ENCODE measurements at regions of chr3 and their contacts with region 1.

Region 1: DNA sequence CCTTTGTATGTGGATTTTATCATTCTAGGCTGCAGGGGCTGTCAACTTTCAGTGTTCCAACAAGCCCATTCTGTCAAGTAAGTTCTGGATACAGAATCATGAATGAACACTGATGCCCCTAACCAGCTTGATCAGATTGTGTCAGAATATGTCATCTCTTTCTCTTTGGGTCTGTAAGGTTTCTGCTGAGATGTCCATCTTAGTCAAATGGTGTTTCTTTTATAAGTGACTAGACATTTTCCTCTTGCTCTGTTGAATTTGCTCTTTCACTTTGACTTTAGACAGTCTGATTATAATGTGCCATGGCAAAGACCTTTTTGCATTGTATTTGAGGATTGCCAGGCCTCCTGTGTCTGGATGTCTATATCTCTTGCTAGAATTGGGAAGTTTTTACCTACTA is 660.9 kb upstream of the CBLB start:
- DNase-seq: no peak
- H3K4me3 ChIP-seq: no peak overlapping the region
- H3K27ac ChIP-seq: no peak overlapping the region
- H3K4me1 ChIP-seq: no peaks in the 10 kb centered on the region
- H3K27me3 ChIP-seq: no peaks in the 10 kb centered on the region
- CTCF ChIP-seq: no peak

Region 2: DNA sequence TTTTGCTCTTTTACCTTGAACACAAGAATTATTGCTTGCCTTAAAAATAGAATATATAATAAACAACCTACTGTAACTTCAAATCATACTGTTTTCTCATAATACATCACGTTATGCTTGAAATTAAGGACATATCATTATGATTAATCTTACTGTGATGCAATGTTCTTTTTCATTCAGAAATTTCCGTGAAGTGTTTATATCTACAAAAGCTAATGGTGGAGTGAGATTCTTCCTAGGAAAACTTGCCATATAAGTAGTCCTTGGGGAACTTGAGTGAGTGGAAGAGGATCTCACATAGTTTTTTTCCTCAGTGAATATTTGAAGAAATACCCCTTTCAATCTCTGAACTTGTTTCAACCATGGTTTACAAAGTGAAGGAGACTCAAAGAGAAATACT is 162.2 kb before region 1 on chr3:
- CTCF ChIA-PET with region 1: no interaction called
- POLR2A ChIA-PET with region 1: no interaction called
- intact Hi-C with region 1: loop called (anchors 10 kb)
- DNase-seq: no peak
- H3K4me3 ChIP-seq: no peak overlapping the region
- H3K27ac ChIP-seq: no peak overlapping the region
- H3K4me1 ChIP-seq: no peaks in the 10 kb centered on the region
- H3K27me3 ChIP-seq: no peaks in the 10 kb centered on the region
- CTCF ChIP-seq: no peak

Region 3: GRCh38 chr3:106824856-106825255 is 295.1 kb after region 1 on chr3:
- CTCF ChIA-PET with region 1: no interaction called
- POLR2A ChIA-PET with region 1: no interaction called
- intact Hi-C with region 1: no loop called
- DNase-seq: no peak
- H3K4me3 ChIP-seq: no peak overlapping the region
- H3K27ac ChIP-seq: no peak overlapping the region
- H3K4me1 ChIP-seq: no peaks in the 10 kb centered on the region
- H3K27me3 ChIP-seq: no peaks in the 10 kb centered on the region
- CTCF ChIP-seq: peak; percentile 60; the same call in 1 of the 2 replicates

Region 4: DNA sequence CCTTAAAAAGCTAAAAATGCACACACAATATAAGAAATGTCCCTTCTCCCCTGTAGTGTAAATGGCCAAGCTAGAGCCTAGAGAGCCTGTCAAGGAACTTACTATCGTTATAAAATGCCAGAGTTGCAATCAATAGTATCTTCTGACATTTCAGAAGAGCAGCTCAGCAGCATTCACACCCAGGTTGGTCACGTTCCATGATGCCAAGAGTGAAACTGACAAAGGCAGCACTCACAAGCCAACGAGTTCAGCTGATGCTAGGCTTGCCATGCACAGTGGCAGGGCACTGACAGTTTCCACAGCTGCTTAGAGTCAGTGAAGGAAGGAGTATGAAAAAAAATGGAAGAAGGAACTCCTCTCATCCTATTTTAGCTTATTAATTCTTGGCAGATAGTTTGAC is 516.1 kb after region 1 on chr3:
- CTCF ChIA-PET with region 1: no interaction called
- POLR2A ChIA-PET with region 1: no interaction called
- intact Hi-C with region 1: no loop called
- DNase-seq: no peak
- H3K4me3 ChIP-seq: no peak overlapping the region
- H3K27ac ChIP-seq: no peak overlapping the region
- H3K4me1 ChIP-seq: no peaks in the 10 kb centered on the region
- H3K27me3 ChIP-seq: no peaks in the 10 kb centered on the region
- CTCF ChIP-seq: no peak

Measured in PC-9 (cell line).